H1 (cell line): ENCODE measurements at regions of chr10 and their contacts with region 1.

Region 1: GRCh38 chr10:96513698-96514561 is at the start of gene TLL2:
- DNase-seq: peak; percentile 85 to 92
- H3K4me3 ChIP-seq: peak within 1 kb of the TSS; percentile 32 to 71 (median 66)
- H3K27ac ChIP-seq: no peak within 1 kb of the TSS; the same call in 1 of the 2 replicates
- H3K4me1 ChIP-seq: peaks cover 12 to 16% (median 13%) of the 10 kb centered on the region in 4 experiments
- H3K27me3 ChIP-seq: peaks cover 10 to 29% (median 25%) of the 10 kb centered on the region in 4 experiments
- CTCF ChIP-seq: peak; percentile 60 to 84 (median 73)
- EP300 ChIP-seq: peak in 1 of 2 experiments; percentile 66; a peak in 1 of 3 replicates
- POLR2A ChIP-seq: peak in 1 of 2 experiments; percentile 60; a peak in 1 of 3 replicates
- RAD21 ChIP-seq: peak; percentile 50 to 68
- total RNA-seq, gene TLL2: 3.0 and 3.2 TPM in 2 replicates

Region 2: GRCh38 chr10:96366502-96366901 is 147.4 kb before region 1 on chr10:
- CTCF ChIA-PET with region 1: interaction called, 187 read pairs
- POLR2A ChIA-PET with region 1: interaction called, 3 read pairs
- DNase-seq: no peak
- H3K4me3 ChIP-seq: no peak overlapping the region
- H3K27ac ChIP-seq: no peak overlapping the region
- H3K4me1 ChIP-seq: peaks cover 0 to 2% (median 0%) of the 10 kb centered on the region in 4 experiments; a peak in 3 of 7 replicates
- H3K27me3 ChIP-seq: no peaks in the 10 kb centered on the region; a peak in 1 of 7 replicates
- CTCF ChIP-seq: no peak
- EP300 ChIP-seq: no peak
- POLR2A ChIP-seq: no peak
- RAD21 ChIP-seq: no peak

Region 3: DNA sequence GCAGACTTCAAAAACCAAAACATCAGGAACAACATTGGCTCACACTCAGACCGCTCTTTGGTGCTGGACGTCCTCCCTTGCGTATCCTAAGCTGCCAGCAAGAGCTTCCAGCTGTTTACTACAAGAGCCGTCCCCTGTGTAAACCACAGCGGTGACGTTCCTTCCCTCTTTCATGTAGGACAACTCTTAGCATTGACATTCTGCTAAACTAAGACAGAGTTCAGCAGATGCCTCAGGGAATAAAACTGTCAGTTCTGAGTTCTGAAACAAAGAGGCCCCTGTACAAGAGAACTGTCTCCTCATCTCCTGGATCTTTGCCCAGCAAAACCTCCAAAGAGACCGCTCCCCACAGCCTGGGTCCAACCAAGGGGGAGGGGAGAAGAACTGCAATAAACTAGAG is 97.3 kb before region 1 on chr10:
- CTCF ChIA-PET with region 1: interaction called, 36 read pairs
- POLR2A ChIA-PET with region 1: interaction called, 7 read pairs
- DNase-seq: peak in 1 of 2 experiments; percentile 27
- H3K4me3 ChIP-seq: no peak overlapping the region
- H3K27ac ChIP-seq: no peak overlapping the region
- H3K4me1 ChIP-seq: no peaks in the 10 kb centered on the region
- H3K27me3 ChIP-seq: no peaks in the 10 kb centered on the region
- CTCF ChIP-seq: no peak
- EP300 ChIP-seq: no peak
- POLR2A ChIP-seq: no peak
- RAD21 ChIP-seq: no peak

Region 4: GRCh38 chr10:96456296-96456840 is 57.6 kb before region 1 on chr10:
- CTCF ChIA-PET with region 1: interaction called, 11 read pairs
- POLR2A ChIA-PET with region 1: interaction called, 3 read pairs
- DNase-seq: no peak
- H3K4me3 ChIP-seq: no peak overlapping the region
- H3K27ac ChIP-seq: no peak overlapping the region
- H3K4me1 ChIP-seq: peaks cover 8 to 18% (median 11%) of the 10 kb centered on the region in 4 experiments
- H3K27me3 ChIP-seq: no peaks in the 10 kb centered on the region
- CTCF ChIP-seq: no peak
- EP300 ChIP-seq: no peak
- POLR2A ChIP-seq: no peak
- RAD21 ChIP-seq: no peak

Region 5: GRCh38 chr10:96491299-96491698 is 22.6 kb before region 1 on chr10:
- CTCF ChIA-PET with region 1: interaction called, 276 read pairs
- POLR2A ChIA-PET with region 1: interaction called, 15 read pairs
- DNase-seq: no peak
- H3K4me3 ChIP-seq: no peak overlapping the region
- H3K27ac ChIP-seq: no peak overlapping the region
- H3K4me1 ChIP-seq: no peaks in the 10 kb centered on the region
- H3K27me3 ChIP-seq: no peaks in the 10 kb centered on the region
- CTCF ChIP-seq: peak; percentile 31 to 58 (median 56)
- EP300 ChIP-seq: no peak
- POLR2A ChIP-seq: no peak
- RAD21 ChIP-seq: peak; percentile 76 to 79

Region 6: GRCh38 chr10:96524741-96525140 is 10.8 kb after region 1 on chr10:
- CTCF ChIA-PET with region 1: interaction called, 10 read pairs
- POLR2A ChIA-PET with region 1: interaction called, 8 read pairs
- DNase-seq: no peak
- H3K4me3 ChIP-seq: no peak overlapping the region
- H3K27ac ChIP-seq: no peak overlapping the region
- H3K4me1 ChIP-seq: no peaks in the 10 kb centered on the region
- H3K27me3 ChIP-seq: no peaks in the 10 kb centered on the region
- CTCF ChIP-seq: no peak
- EP300 ChIP-seq: no peak
- POLR2A ChIP-seq: no peak
- RAD21 ChIP-seq: no peak